Activated B cell treated with CpG ODN at 0.5 μM for 24 hours (primary cell): ENCODE measurements at regions of chr17 and their contacts with region 1.

Region 1: DNA sequence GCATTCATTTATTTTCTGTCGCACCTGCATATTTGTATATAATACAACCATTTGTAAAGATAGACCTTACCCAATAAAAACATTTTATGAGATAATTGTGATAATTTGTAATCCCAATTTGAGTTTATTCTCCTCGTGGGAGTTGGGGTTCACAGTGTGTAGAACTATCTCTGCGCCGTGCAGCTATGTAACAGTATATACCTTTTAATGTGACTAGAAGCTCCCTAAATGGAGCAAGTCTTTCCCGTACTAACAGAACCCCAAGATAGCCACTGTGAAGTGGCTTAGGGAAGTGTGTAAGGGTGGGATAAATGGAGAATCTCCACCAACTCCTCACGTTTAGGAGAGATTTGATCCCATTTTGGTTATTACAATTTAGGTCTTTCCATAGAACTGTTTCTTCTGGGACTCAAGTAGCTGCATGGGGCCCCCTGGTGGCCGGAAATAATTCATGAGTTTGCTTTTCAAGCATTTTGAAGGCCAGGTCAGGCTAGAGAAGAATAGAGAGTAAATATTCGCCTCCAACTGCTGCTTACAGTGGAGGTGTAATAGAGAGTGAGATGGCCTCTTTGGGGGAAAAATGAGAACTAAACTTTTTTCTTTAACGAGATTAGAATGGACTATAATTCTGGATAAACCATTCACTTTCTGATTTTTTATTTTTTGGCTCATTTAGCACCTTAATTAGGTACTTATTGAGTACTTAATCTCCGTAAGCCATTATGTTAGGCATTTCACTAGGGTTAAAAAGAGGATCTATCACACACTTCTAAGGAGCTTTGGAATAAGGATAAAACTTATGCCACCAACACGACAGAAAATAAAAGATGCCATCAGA is 4.5 kb downstream of the TMEM100 start:
- DNase-seq: peak; percentile 38
- ATAC-seq: peak; percentile 64
- H3K4me3 Mint-ChIP-seq: no peak overlapping the region
- H3K27ac Mint-ChIP-seq: no peak overlapping the region
- H3K4me1 Mint-ChIP-seq: no peaks in the 10 kb centered on the region
- H3K27me3 Mint-ChIP-seq: peaks cover 16% of the 10 kb centered on the region
- CTCF ChIP-seq: peak; percentile 85

Region 2: GRCh38 chr17:55533608-55534007 is 184.5 kb before region 1 on chr17:
- CTCF ChIA-PET with region 1: interaction called, 96 read pairs
- POLR2A ChIA-PET with region 1: no interaction called
- intact Hi-C with region 1: no loop called
- DNase-seq: no peak
- ATAC-seq: no peak
- H3K4me3 Mint-ChIP-seq: no peak overlapping the region
- H3K27ac Mint-ChIP-seq: no peak overlapping the region
- H3K4me1 Mint-ChIP-seq: no peaks in the 10 kb centered on the region
- H3K27me3 Mint-ChIP-seq: peaks cover 4% of the 10 kb centered on the region
- CTCF ChIP-seq: no peak

Region 3: DNA sequence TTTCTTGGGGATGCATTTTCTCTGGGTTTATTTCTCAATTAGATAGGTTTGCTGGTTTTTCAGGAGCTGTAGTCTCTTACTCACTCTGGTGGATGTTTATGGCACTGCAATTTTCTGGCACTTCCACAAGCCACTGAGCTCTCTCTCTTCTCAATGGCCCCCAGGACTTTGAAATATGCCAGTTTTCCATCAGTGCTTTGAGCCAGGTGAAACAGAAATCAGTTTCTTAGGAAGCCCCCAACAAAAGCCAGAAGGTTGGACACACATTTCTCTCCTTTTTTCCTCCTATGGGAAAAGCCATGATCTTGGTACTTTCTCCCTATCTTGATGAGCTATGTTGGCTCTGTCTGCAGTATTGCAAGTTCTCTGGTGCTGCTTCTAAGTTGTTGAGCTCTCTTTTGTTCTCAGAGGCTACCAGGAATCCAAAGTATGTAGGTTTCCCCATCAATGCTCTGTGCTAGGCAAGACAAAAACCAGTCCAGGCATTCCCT is 116.2 kb before region 1 on chr17:
- CTCF ChIA-PET with region 1: interaction called, 18 read pairs
- POLR2A ChIA-PET with region 1: no interaction called
- intact Hi-C with region 1: loop called (anchors 2 kb)
- DNase-seq: no peak
- ATAC-seq: peak; percentile 75
- H3K4me3 Mint-ChIP-seq: no peak overlapping the region
- H3K27ac Mint-ChIP-seq: no peak overlapping the region
- H3K4me1 Mint-ChIP-seq: no peaks in the 10 kb centered on the region
- H3K27me3 Mint-ChIP-seq: peaks cover 4% of the 10 kb centered on the region
- CTCF ChIP-seq: no peak

Region 4: GRCh38 chr17:55641676-55642081 is 76.4 kb before region 1 on chr17:
- CTCF ChIA-PET with region 1: interaction called, 12 read pairs
- POLR2A ChIA-PET with region 1: no interaction called
- intact Hi-C with region 1: no loop called
- DNase-seq: no peak
- ATAC-seq: no peak
- H3K4me3 Mint-ChIP-seq: no peak overlapping the region
- H3K27ac Mint-ChIP-seq: no peak overlapping the region
- H3K4me1 Mint-ChIP-seq: peaks cover 3% of the 10 kb centered on the region
- H3K27me3 Mint-ChIP-seq: peaks cover 2% of the 10 kb centered on the region
- CTCF ChIP-seq: no peak

Region 5: DNA sequence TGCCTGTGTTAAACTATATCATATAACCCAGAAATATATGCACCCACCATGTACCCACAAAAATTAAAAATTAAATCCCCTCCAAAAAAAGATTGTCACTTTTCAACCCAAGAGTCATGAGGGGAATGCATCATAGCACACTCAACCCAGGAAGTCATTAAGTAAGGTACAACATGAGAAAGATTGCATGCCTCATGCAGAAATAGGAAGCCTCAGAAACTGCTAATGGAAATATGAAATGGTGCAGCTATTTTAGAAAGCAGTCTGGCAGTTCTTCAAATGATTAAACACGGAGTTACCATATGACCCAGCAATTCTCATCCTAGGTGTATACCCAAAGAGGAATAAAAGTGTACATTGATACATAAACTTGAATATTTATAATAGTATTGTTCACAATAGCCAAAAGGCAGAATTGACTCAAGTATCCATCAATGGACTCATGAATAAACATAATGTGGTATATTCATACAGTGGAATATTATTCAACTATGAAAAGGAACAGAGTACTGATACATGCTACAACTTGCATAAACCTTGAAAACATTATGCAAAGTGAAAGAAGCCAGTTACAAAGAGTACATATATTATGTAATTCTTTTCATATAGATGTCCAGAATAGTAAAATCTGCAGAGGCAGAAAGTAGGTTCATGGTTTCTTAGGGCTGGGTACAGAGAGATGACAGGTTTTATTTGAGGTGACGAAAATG is 65.8 kb before region 1 on chr17:
- CTCF ChIA-PET with region 1: no interaction called
- POLR2A ChIA-PET with region 1: no interaction called
- intact Hi-C with region 1: no loop called
- DNase-seq: no peak
- ATAC-seq: no peak
- H3K4me3 Mint-ChIP-seq: no peak overlapping the region
- H3K27ac Mint-ChIP-seq: no peak overlapping the region
- H3K4me1 Mint-ChIP-seq: no peaks in the 10 kb centered on the region
- H3K27me3 Mint-ChIP-seq: peaks cover 7% of the 10 kb centered on the region
- CTCF ChIP-seq: no peak

Region 6: GRCh38 chr17:55702150-55702549 is 16.0 kb before region 1 on chr17:
- CTCF ChIA-PET with region 1: interaction called, 10 read pairs
- POLR2A ChIA-PET with region 1: no interaction called
- intact Hi-C with region 1: no loop called
- DNase-seq: no peak
- ATAC-seq: no peak
- H3K4me3 Mint-ChIP-seq: no peak overlapping the region
- H3K27ac Mint-ChIP-seq: no peak overlapping the region
- H3K4me1 Mint-ChIP-seq: no peaks in the 10 kb centered on the region
- H3K27me3 Mint-ChIP-seq: peaks cover 24% of the 10 kb centered on the region
- CTCF ChIP-seq: no peak

Region 7: DNA sequence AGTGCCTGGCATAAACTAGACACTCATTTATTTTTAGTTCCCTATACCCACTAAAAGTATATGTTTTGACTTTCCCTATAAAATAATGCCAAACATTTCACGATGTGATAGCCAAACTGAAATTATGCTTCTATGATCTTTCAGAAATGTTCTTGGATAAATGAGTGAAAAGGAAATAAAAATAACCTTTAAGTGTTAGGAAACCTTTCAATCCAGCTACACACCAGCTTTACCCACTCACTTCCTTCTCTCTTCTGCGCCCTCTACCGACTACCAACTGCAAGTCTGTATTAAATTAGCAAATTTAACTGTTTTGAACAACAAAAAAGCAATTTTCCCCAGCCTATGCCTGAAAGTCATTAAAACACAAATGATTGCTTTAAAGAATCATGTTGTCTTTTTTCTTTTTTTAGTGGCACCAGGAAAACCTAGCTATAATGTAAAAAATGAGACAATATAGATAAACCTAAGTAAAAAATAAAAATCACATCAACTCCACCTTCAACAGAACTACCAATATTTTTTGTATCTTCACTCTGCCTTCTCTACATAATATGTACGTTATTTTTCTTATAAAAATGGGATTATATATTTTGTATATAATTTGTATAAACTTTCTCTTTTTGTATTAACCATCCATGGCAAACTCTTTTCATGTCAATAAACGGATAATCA is 17.8 kb after region 1 on chr17:
- CTCF ChIA-PET with region 1: interaction called, 21 read pairs
- POLR2A ChIA-PET with region 1: no interaction called
- intact Hi-C with region 1: no loop called
- DNase-seq: no peak
- ATAC-seq: no peak
- H3K4me3 Mint-ChIP-seq: no peak overlapping the region
- H3K27ac Mint-ChIP-seq: no peak overlapping the region
- H3K4me1 Mint-ChIP-seq: peaks cover 10% of the 10 kb centered on the region
- H3K27me3 Mint-ChIP-seq: peaks cover 14% of the 10 kb centered on the region
- CTCF ChIP-seq: peak; percentile 78